HEK293 (cell line): ENCODE measurements at regions of chr6 and their contacts with region 1.

Region 1: GRCh38 chr6:80143419-80143937 is 37.0 kb downstream of the BCKDHB start:
- H3K4me3 ChIP-seq: no peak overlapping the region
- H3K27ac ChIP-seq: no peak overlapping the region
- H3K4me1 ChIP-seq: peaks cover 10% of the 10 kb centered on the region
- CTCF ChIP-seq: no peak

Region 2: DNA sequence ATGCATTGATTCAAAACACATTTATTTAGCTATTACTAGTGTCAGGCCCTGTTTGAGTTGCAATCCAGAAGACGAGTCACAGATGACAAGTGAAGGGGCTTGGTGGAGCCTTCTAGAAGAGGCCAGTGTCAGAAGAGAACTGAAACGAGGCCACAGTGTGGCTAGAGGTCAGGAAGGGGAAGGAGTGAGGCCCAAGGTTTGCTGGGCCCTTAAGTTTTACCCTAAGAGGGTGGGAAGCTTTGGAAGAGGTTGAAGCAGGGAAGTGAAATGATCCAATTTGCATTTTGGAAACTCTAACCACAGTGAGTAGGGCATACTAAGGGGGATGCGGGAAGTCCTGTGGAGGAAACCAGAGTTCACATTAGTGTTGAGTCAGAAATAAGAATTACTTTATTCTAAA is 114.0 kb before region 1 on chr6:
- CTCF ChIA-PET with region 1: no interaction called
- POLR2A ChIA-PET with region 1: no interaction called
- H3K4me3 ChIP-seq: no peak overlapping the region
- H3K27ac ChIP-seq: no peak overlapping the region
- H3K4me1 ChIP-seq: no peaks in the 10 kb centered on the region
- CTCF ChIP-seq: no peak

Region 3: GRCh38 chr6:80060774-80061173 is 82.7 kb before region 1 on chr6:
- CTCF ChIA-PET with region 1: no interaction called
- POLR2A ChIA-PET with region 1: no interaction called
- H3K4me3 ChIP-seq: no peak overlapping the region
- H3K27ac ChIP-seq: no peak overlapping the region
- H3K4me1 ChIP-seq: no peaks in the 10 kb centered on the region
- CTCF ChIP-seq: no peak

Region 4: GRCh38 chr6:80133020-80133419 is 10.5 kb before region 1 on chr6:
- CTCF ChIA-PET with region 1: interaction called, 13 read pairs
- POLR2A ChIA-PET with region 1: no interaction called
- H3K4me3 ChIP-seq: no peak overlapping the region
- H3K27ac ChIP-seq: no peak overlapping the region
- H3K4me1 ChIP-seq: 0 out of 2 replicates have a peak, but pooled peaks cover 3% of the 10 kb centered on the region
- CTCF ChIP-seq: peak; percentile 55; the same call in 1 of the 2 replicates

Region 5: DNA sequence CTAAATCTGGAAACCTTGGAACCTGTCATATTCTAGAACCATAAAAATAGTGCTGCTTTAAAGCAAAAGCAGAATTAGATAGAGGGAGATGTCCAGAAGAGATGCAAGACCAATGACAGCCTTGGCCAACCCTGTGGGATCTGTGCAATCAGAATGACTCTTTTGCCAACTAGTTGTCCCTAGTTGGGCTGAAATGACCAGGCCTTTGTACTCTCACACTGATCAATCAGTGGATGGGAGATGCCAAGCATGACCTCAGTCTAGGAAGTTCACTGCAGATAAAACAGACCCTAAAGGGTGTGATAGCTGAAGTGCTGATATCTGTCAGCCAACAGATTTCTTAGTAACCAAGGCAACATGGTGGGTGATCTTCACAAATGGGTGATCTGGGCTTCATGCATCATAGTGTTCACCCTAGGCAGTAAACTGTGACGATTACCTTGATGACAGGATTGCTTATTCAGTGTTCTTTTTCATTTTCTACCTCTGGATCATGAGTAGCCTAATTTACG is 15.1 kb after region 1 on chr6:
- CTCF ChIA-PET with region 1: no interaction called
- POLR2A ChIA-PET with region 1: no interaction called
- H3K4me3 ChIP-seq: no peak overlapping the region
- H3K27ac ChIP-seq: no peak overlapping the region
- H3K4me1 ChIP-seq: no peaks in the 10 kb centered on the region
- CTCF ChIP-seq: no peak

Region 6: DNA sequence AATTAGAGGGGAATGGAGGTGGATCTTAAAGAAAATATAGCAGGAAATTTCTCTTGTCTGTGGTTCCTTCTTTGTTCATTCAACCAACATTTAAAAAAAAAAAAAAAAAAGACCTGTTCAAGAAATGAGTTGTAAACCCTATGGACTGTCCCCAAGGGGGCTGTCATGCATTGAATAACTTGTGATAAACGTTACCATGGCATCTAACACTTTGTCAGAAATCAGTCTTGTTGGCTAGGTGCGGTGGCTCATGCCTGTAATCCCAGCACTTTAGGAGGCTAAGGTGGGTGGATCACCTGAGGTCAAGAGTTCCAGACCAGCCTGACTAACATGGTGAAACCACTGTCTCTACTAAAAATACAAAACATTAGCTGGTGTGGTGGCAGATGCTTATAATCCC is 344.7 kb after region 1 on chr6:
- CTCF ChIA-PET with region 1: no interaction called
- POLR2A ChIA-PET with region 1: no interaction called
- H3K4me3 ChIP-seq: no peak overlapping the region
- H3K27ac ChIP-seq: no peak overlapping the region
- H3K4me1 ChIP-seq: no peaks in the 10 kb centered on the region
- CTCF ChIP-seq: no peak